Gastrocnemius medialis (tissue), 4 donors: ENCODE measurements at regions of chr10 and their contacts with region 1.

Region 1: DNA sequence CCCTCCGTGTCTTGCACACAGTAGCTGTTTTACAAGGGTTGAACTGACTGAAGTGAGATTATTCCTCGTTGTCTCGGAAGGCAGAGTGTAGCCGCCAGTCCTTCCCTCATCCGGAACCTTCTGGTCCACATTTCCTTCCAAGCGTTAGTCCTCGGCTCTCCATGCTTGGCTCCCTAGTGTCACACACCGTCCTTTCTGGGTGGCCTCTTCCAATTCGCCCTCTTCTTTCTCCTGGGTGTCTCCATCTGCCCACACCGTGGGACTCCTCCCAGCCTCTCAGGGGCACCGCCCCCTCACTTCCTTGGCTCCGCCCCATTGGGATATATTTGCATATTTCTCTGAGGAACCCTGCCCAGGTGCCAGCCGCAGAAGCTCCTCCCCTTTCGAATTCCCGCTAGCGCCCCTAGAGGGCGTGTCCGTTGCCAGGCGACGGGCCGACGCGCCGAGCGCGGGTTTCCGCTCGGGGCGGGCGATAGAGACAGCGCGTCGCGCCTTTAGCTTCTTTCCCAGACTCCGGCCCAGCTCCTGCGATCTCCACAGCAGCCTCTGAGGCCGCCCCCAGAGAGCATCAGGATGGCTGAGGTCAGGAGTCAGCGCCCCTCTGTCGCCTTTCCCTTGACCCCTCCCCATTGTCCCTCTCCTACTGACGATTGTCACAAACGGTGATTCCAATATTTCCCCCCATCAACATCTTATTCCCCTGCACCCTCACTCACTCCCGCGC is at the start of gene CFAP58:
- DNase-seq: peak; percentile 85 to 92
- ATAC-seq: peak; percentile 92
- H3K4me3 ChIP-seq: peak within 1 kb of the TSS; percentile 38 to 60 (median 54)
- H3K27ac ChIP-seq: peak within 1 kb of the TSS in 1 of 4 donors; percentile 20
- H3K4me1 ChIP-seq: peaks cover 11 to 22% of the 10 kb centered on the region in 2 donors
- H3K27me3 ChIP-seq: no peaks in the 10 kb centered on the region
- CTCF ChIP-seq: peak; percentile 71 to 88 (median 81)
- POLR2A ChIP-seq: no peak
- total RNA-seq, gene CFAP58: 0.13 to 0.36 (median 0.27) TPM in 3 of 4 donors, not detected in the other

Region 2: GRCh38 chr10:104291439-104291951 is 62.0 kb before region 1 on chr10:
- in situ Hi-C with region 1: loop called in 2 of 4 experiments (anchors 5 kb)
- intact Hi-C with region 1: loop called (anchors 1 kb)
- DNase-seq: peak; percentile 73 to 80
- ATAC-seq: peak; percentile 93 to 98
- H3K4me3 ChIP-seq: no peak overlapping the region
- H3K27ac ChIP-seq: no peak overlapping the region
- H3K4me1 ChIP-seq: no peaks in the 10 kb centered on the region
- H3K27me3 ChIP-seq: no peaks in the 10 kb centered on the region
- CTCF ChIP-seq: peak; percentile 98 to 100 (median 99)
- POLR2A ChIP-seq: no peak

Region 3: GRCh38 chr10:104300736-104301292 is 52.7 kb before region 1 on chr10:
- in situ Hi-C with region 1: loop called in 3 of 4 experiments (anchors 5 kb)
- intact Hi-C with region 1: loop called (anchors 1 kb)
- DNase-seq: peak; percentile 76 to 77
- ATAC-seq: peak; percentile 66 to 83
- H3K4me3 ChIP-seq: peak overlapping the region in 1 of 4 donors; percentile 3
- H3K27ac ChIP-seq: peak overlapping the region; percentile 66 to 77 (median 74)
- H3K4me1 ChIP-seq: peaks cover 46 to 52% of the 10 kb centered on the region in 2 donors
- H3K27me3 ChIP-seq: no peaks in the 10 kb centered on the region
- CTCF ChIP-seq: peak in 2 of 5 experiments; percentile 7 to 26
- POLR2A ChIP-seq: peak; percentile 0 to 23

Region 4: GRCh38 chr10:104406715-104407650 is 53.5 kb after region 1 on chr10:
- in situ Hi-C with region 1: no loop called
- intact Hi-C with region 1: no loop called
- DNase-seq: no peak
- ATAC-seq: no peak
- H3K4me3 ChIP-seq: no peak overlapping the region
- H3K27ac ChIP-seq: no peak overlapping the region
- H3K4me1 ChIP-seq: no peaks in the 10 kb centered on the region
- H3K27me3 ChIP-seq: no peaks in the 10 kb centered on the region
- CTCF ChIP-seq: peak in 2 of 5 experiments; percentile 28 to 32
- POLR2A ChIP-seq: no peak